Heart left ventricle (tissue), 16 donors: ENCODE measurements at regions of chr7 and their contacts with region 1.

Region 1: GRCh38 chr7:114026486-114027089 is 107.8 kb upstream of the PPP1R3A start:
- DNase-seq: no peak
- ATAC-seq: no peak
- H3K4me3 ChIP-seq: no peak overlapping the region
- H3K27ac ChIP-seq: no peak overlapping the region
- H3K4me1 ChIP-seq: no peaks in the 10 kb centered on the region
- H3K27me3 ChIP-seq: no peaks in the 10 kb centered on the region
- CTCF ChIP-seq: peak; percentile 54 to 84 (median 70)
- POLR2A ChIP-seq: no peak

Region 2: DNA sequence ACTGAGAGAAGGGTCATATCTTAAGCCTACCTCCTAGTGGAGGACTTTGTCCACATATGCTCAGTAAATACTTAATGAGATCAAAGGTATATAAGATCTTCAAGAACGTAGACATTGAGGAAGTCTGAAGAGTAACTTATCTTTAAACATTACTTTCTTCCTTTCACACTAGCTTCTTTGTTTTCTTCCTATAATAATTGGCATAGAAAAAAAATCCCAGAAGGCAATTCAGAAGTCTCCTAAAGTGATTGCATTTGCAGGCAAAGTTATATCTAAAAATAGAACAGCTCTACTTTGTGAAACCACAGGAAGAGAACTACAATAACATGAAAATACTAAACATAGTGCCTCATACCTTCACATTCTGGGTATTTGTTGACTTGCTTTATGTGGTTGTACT is 258.2 kb before region 1 on chr7:
- intact Hi-C with region 1: loop called in 1 of 10 experiments (anchors 10 kb)
- DNase-seq: no peak
- ATAC-seq: no peak
- H3K4me3 ChIP-seq: no peak overlapping the region
- H3K27ac ChIP-seq: no peak overlapping the region
- H3K4me1 ChIP-seq: peaks cover 0 to 8% (median 0%) of the 10 kb centered on the region in 12 donors
- H3K27me3 ChIP-seq: no peaks in the 10 kb centered on the region
- CTCF ChIP-seq: no peak
- POLR2A ChIP-seq: no peak

Region 3: GRCh38 chr7:113784316-113784715 is 242.3 kb before region 1 on chr7:
- intact Hi-C with region 1: loop called in 1 of 10 experiments (anchors 10 kb)
- DNase-seq: no peak
- ATAC-seq: no peak
- H3K4me3 ChIP-seq: no peak overlapping the region
- H3K27ac ChIP-seq: no peak overlapping the region
- H3K4me1 ChIP-seq: peaks cover 0 to under 1% (median 0%) of the 10 kb centered on the region in 12 donors
- H3K27me3 ChIP-seq: no peaks in the 10 kb centered on the region
- CTCF ChIP-seq: no peak
- POLR2A ChIP-seq: no peak

Region 4: GRCh38 chr7:114663502-114663901 is 636.9 kb after region 1 on chr7:
- intact Hi-C with region 1: loop called in 1 of 10 experiments (anchors 10 kb)
- DNase-seq: no peak
- ATAC-seq: no peak
- H3K4me3 ChIP-seq: no peak overlapping the region
- H3K27ac ChIP-seq: no peak overlapping the region
- H3K4me1 ChIP-seq: peaks cover 0 to 12% (median 0%) of the 10 kb centered on the region in 12 donors
- H3K27me3 ChIP-seq: no peaks in the 10 kb centered on the region
- CTCF ChIP-seq: peak in 5 of 12 donors; percentile 18 to 38 (median 23)
- POLR2A ChIP-seq: no peak

Region 5: GRCh38 chr7:115851291-115851690 is 1824.7 kb after region 1 on chr7:
- intact Hi-C with region 1: loop called in 1 of 10 experiments (anchors 10 kb)
- DNase-seq: no peak
- ATAC-seq: no peak
- H3K4me3 ChIP-seq: no peak overlapping the region
- H3K27ac ChIP-seq: no peak overlapping the region
- H3K4me1 ChIP-seq: no peaks in the 10 kb centered on the region
- H3K27me3 ChIP-seq: peaks cover 0 to 9% (median 0%) of the 10 kb centered on the region in 9 donors
- CTCF ChIP-seq: peak in 7 of 12 donors; percentile 15 to 38 (median 30)
- POLR2A ChIP-seq: no peak

Region 6: GRCh38 chr7:115910541-115911164 is 1884.1 kb after region 1 on chr7:
- intact Hi-C with region 1: loop called in 4 of 10 experiments (anchors 10 kb)
- DNase-seq: no peak
- ATAC-seq: no peak
- H3K4me3 ChIP-seq: no peak overlapping the region
- H3K27ac ChIP-seq: no peak overlapping the region
- H3K4me1 ChIP-seq: peaks cover 0 to 14% (median 0%) of the 10 kb centered on the region in 12 donors
- H3K27me3 ChIP-seq: peaks cover 0 to 8% (median 0%) of the 10 kb centered on the region in 9 donors
- CTCF ChIP-seq: peak; percentile 35 to 70 (median 52)
- POLR2A ChIP-seq: no peak